CD4-positive, alpha-beta T cell (primary cell): ENCODE measurements at regions of chr5 and their contacts with region 1.

Region 1: DNA sequence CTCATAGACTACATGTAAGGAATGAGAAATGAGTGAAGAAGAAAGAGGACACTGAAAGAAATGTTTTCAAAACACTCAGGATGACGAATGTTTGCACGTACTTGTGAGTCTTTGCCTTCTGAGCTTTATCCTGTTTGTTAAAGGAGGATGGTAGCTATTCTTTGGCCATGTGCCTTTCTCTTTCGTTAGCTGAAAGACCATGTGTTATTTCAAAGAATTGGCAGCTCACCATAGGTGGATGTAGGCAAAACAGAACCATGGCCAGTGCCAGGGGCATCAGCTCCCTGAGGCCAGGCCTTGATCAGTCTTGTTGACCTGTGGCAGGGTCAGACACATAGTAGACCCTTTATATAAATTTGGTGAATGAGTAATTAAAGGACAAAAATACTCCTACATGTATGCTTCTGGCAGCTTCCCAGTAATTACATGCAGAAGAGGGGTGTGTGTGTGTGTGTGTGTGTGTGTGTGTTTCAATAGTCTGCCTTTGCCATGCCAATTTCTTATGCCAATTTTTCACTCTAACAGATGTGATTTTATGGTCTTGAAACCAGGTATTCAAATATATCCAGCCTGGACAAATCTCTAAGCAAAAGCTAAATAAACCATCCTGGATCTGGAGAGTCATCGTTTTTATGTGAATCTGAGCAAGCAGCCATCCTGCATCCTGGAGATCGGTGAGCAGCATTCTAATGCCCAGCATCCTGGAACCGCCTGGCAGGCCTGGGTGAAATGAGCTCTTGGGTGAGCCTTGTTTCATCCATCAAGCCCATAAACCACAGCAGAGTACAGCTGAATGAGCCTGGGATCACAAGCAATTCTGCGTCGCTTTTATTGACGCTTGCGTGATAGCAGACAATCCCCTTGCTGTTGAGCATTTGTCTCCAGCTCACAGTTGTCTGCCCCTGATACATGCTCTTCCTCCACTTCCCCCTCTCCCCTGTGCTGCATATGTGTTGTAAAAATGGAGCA is 475.4 kb downstream of the MED10 start:
- DNase-seq: no peak
- ATAC-seq: no peak
- H3K4me3 ChIP-seq: no peak overlapping the region
- H3K4me3 Mint-ChIP-seq: no peak overlapping the region
- H3K27ac ChIP-seq: no peak overlapping the region
- H3K27ac Mint-ChIP-seq: no peak overlapping the region
- H3K4me1 ChIP-seq: no peaks in the 10 kb centered on the region
- H3K4me1 Mint-ChIP-seq: no peaks in the 10 kb centered on the region
- H3K27me3 ChIP-seq: no peaks in the 10 kb centered on the region
- H3K27me3 Mint-ChIP-seq: no peaks in the 10 kb centered on the region
- CTCF ChIP-seq: no peak

Region 2: DNA sequence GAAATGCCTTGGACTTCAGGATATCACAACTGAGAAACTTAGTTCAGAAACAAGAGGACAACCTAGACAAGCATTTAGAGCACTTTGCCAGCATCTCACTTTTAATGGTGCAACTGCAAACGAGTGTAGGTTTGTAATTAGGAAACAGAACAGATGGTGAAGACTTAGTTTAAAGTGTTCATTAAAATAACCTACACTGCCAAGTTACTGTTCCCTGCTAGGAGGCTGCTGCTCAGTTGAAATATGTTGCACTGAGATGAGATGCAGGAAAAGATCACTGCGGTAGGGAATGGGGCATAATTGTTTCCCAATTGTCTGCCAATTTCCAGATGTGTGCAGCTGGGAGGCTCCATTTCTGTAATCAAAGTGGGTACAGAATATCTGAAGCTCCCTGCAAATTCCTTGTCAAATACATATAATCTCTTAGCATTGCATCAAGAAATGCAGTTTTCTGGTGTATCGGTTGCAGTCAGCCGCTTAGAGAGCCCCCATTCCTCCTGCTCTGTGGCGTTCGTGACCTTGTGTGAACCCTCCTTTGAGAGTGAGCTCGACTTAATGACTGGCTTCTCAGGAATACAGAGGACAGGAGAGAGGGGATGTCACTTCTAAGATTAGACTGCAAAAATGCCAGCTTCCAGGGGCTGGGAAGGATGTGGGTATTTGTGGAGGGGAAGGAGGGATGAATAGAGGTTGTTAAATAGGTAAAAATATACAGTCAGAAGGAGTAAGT is 26.5 kb after region 1 on chr5:
- CTCF ChIA-PET with region 1: no interaction called
- POLR2A ChIA-PET with region 1: no interaction called
- intact Hi-C with region 1: loop called in 1 of 2 experiments (anchors 1 kb)
- DNase-seq: no peak
- ATAC-seq: no peak
- H3K4me3 ChIP-seq: no peak overlapping the region
- H3K4me3 Mint-ChIP-seq: no peak overlapping the region
- H3K27ac ChIP-seq: no peak overlapping the region
- H3K27ac Mint-ChIP-seq: no peak overlapping the region
- H3K4me1 ChIP-seq: no peaks in the 10 kb centered on the region
- H3K4me1 Mint-ChIP-seq: no peaks in the 10 kb centered on the region
- H3K27me3 ChIP-seq: no peaks in the 10 kb centered on the region
- H3K27me3 Mint-ChIP-seq: peaks cover 10% of the 10 kb centered on the region
- CTCF ChIP-seq: no peak